Left lung (tissue), 14 donors: ENCODE measurements at regions of chr16 and their contacts with region 1.

Region 1: DNA sequence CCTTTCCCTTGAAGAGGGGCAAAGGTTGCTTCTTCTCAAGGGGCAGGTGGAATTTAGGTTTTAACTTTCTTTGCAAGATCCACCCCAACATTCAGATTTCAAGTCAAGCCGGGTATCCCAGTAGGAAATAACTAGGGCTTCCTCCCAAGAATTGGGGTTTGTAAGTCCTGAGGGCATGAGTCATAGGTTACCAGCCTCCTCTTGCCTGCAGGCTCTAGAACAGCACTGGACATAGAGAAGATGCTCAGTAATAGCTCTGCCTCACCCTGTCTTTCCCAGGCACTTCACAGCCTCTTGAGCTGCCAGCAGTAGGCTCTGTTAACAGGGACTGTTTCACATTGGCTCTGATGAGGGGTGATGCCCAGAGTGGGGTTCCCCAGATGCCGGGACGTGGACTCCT is 35.8 kb upstream of the ZFP90 start:
- DNase-seq: no peak
- ATAC-seq: peak; percentile 49
- H3K4me3 ChIP-seq: no peak overlapping the region
- H3K27ac ChIP-seq: no peak overlapping the region
- H3K4me1 ChIP-seq: no peaks in the 10 kb centered on the region
- H3K27me3 ChIP-seq: no peaks in the 10 kb centered on the region
- CTCF ChIP-seq: no peak

Region 2: GRCh38 chr16:68396481-68396880 is 106.9 kb before region 1 on chr16:
- intact Hi-C with region 1: loop called in 1 of 2 experiments (anchors 5 kb)
- DNase-seq: peak in 2 of 4 donors; percentile 28 to 33
- ATAC-seq: peak; percentile 82
- H3K4me3 ChIP-seq: no peak overlapping the region
- H3K27ac ChIP-seq: no peak overlapping the region
- H3K4me1 ChIP-seq: no peaks in the 10 kb centered on the region
- H3K27me3 ChIP-seq: no peaks in the 10 kb centered on the region
- CTCF ChIP-seq: peak; percentile 46 to 64

Region 3: DNA sequence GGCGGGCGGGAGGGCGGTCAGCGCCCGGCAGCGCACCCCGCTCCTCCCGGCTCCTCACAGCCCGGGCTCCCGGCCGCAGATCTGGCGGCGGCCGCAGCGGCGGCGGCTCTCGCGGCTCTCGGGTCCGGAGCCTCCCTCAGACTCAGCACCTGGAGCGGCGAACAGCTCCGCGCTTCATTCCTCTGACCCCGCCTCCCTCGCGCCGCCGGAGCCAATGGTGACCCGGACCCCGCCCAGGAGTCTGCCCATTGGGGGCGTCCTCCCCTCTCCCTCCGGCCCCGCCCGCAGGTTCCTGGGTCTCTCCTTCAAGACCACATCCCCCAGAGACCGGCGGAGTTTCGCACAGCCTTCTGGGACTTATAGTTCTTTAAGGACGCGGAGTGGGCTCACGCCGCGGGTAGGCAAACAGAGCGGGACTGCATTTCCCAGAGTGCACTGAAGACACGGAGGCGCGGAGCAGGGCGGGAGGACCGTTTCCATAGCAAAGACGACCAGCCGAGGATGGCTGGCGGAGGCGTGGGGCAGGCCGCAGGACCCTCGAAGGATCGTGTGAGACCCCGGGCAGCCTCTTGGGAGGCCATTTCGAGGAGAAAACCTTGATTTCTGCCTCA is 54.9 kb before region 1 on chr16 and contains the start of gene SMPD3:
- intact Hi-C with region 1: loop called in 1 of 2 experiments (anchors 10 kb)
- DNase-seq: peak; percentile 95 to 98 (median 97)
- ATAC-seq: peak; percentile 99
- H3K4me3 ChIP-seq: peak within 1 kb of the TSS; percentile 16 to 53
- H3K27ac ChIP-seq: no peak within 1 kb of the TSS
- H3K4me1 ChIP-seq: peaks cover 15 to 26% of the 10 kb centered on the region in 2 donors
- H3K27me3 ChIP-seq: peaks cover 8 to 55% of the 10 kb centered on the region in 2 donors
- CTCF ChIP-seq: no peak
- polyA plus RNA-seq, gene SMPD3: 2.6 to 3.7 (median 3.2) TPM

Region 4: GRCh38 chr16:68626557-68626956 is 123.2 kb after region 1 on chr16:
- intact Hi-C with region 1: no loop called
- DNase-seq: no peak
- ATAC-seq: no peak
- H3K4me3 ChIP-seq: no peak overlapping the region
- H3K27ac ChIP-seq: no peak overlapping the region
- H3K4me1 ChIP-seq: no peaks in the 10 kb centered on the region
- H3K27me3 ChIP-seq: no peaks in the 10 kb centered on the region
- CTCF ChIP-seq: no peak